ENCODE measurements at regions of chr14 and their contacts with region 1.

Region 1: DNA sequence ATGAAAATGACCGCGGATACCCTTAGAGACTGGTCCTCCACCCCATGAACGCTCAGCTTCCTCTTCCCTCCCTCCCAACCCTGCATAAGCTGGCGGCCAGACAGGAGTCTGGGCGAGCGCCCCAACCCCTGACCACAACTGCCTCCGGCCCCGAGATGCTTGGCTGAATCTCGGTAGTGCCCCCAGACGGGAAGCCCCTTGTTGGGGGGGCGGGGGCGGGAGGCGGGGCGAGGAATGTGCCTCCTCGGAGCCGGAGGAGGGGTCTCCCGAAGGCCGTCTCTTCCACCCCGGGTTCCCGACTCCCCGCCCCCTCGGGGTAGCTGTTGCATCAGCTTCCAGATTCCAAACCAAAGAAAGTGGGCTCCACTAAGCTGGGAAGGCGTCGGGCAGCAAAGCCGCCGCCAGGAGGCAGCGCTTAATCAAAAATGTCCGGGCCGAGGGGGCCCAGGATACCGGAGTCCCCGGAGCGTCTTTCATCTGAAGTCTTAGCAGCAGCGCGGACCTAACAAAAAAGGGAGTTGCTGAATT is 7.1 kb upstream of the MRPL52 start:
- DNase-seq: peak; percentile 83
- H3K4me3 ChIP-seq: peak overlapping the region; percentile 58
- H3K27ac ChIP-seq: peak overlapping the region; percentile 82
- H3K4me1 ChIP-seq: peaks cover 78% of the 10 kb centered on the region
- CTCF ChIP-seq: peak; percentile 90

Region 2: DNA sequence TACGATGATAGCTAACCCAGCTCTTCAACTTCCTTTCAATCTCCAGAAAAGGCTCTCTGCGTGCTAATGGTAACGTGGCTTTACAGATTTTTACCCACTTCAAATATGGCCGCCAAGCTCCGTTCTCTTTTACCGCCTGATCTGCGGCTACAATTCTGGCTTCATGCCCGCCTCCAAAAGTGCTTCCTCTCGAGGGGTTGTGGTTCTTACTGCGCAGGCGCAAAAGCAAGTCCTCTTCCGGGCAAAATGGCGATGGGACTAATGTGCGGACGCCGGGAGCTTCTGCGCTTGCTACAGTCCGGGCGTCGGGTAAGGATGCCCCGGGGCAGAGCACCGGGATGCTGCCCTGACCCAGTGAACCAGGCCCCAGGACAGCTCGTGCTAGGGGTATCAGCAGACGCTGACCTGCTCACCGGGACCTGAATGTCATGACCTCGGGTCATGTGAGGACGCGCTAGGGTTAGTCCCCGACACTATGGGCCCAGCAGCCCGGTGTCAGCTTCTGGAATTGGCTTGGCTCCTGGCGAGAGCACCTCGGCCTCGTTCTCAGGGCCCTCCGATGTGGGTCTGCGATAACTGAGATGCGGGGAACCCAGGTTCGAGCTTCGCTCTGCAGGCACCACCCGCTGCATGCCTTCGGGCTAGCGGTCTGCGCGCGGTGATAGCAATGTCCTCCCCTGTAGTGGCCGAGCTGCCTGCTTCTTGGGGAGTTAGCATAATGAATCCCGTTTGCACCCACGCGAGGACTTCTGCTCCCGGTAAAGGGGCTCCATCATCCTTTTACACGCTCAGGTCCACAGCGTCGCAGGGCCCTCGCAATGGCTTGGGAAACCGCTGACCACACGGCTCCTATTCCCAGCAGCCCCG is 55.9 kb before region 1 on chr14 and contains the start of gene OXA1L:
- CTCF ChIA-PET with region 1: no interaction called
- POLR2A ChIA-PET with region 1: interaction called, 21 read pairs
- intact Hi-C with region 1: no loop called
- DNase-seq: peak; percentile 99
- H3K4me3 ChIP-seq: peak within 1 kb of the TSS; percentile 95
- H3K27ac ChIP-seq: peak within 1 kb of the TSS; percentile 57
- H3K4me1 ChIP-seq: peaks cover 24% of the 10 kb centered on the region
- CTCF ChIP-seq: no peak
- total RNA-seq, gene OXA1L: 128 and 153 TPM in 2 replicates

Region 3: DNA sequence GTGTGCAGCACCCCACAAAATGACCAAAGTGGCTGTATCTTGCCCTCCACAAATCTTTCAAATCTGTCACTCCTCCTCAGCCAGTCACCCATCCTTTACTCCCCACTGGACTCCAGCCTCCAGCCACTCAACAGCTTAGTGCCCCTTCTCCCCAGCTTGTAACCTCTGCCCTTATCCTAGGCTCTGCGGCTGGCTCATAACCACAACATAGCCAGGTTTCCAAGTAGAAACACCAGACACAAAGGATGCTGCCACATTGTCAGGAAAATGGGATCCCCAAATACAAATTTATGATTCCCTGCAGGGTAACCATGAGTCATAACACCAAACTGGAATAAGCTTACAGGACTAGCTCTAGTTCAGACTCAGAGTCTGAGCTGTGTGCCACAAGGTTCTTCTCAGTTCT is 41.0 kb before region 1 on chr14:
- CTCF ChIA-PET with region 1: interaction called, 5 read pairs
- POLR2A ChIA-PET with region 1: interaction called, 9 read pairs
- intact Hi-C with region 1: loop called (anchors 1 kb)
- DNase-seq: no peak
- H3K4me3 ChIP-seq: no peak overlapping the region
- H3K27ac ChIP-seq: peak overlapping the region; percentile 33
- H3K4me1 ChIP-seq: peaks cover 53% of the 10 kb centered on the region
- CTCF ChIP-seq: no peak

Region 4: DNA sequence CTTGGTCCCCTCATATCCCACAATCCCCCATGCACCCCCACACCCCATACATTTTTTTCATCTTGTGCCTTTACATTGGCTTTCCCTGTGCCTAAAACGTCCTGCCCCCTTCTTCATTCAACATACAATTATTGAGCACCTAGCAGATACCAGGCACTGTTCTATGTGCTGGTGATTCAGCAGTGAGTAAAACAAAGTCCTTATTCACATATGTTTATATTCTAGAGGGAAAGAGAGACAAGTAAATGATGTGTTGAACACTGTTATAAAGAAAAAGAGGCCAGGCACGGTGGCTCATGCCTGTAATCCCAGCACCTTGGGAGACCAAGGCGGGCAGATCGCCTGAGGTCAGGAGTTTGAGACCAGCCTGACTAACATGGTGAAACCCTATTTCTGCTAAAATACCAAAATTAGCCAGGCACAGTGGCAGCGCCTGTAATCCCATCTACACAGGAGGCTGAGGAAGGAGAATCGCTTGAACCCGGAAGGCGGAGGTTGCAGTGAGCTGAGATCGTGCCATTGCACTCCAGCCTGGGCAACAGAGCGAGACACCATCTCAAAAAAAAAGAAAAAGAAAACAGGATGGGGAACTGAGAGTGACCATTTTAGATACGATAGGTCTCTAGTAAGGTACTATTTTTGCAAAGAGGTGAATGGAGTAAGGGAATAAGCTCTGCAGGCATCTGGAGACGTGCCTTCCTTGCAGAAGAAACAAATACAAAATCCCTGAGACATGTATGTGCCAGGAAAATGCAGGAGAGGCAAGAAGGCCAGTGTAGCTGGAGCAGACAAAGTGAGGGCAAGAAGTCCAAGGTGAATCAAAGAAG is 19.6 kb before region 1 on chr14:
- CTCF ChIA-PET with region 1: interaction called, 4 read pairs
- POLR2A ChIA-PET with region 1: interaction called, 15 read pairs
- intact Hi-C with region 1: no loop called
- DNase-seq: peak; percentile 53
- H3K4me3 ChIP-seq: peak overlapping the region; percentile 55
- H3K27ac ChIP-seq: peak overlapping the region; percentile 85
- H3K4me1 ChIP-seq: peaks cover 91% of the 10 kb centered on the region
- CTCF ChIP-seq: no peak

Region 5: DNA sequence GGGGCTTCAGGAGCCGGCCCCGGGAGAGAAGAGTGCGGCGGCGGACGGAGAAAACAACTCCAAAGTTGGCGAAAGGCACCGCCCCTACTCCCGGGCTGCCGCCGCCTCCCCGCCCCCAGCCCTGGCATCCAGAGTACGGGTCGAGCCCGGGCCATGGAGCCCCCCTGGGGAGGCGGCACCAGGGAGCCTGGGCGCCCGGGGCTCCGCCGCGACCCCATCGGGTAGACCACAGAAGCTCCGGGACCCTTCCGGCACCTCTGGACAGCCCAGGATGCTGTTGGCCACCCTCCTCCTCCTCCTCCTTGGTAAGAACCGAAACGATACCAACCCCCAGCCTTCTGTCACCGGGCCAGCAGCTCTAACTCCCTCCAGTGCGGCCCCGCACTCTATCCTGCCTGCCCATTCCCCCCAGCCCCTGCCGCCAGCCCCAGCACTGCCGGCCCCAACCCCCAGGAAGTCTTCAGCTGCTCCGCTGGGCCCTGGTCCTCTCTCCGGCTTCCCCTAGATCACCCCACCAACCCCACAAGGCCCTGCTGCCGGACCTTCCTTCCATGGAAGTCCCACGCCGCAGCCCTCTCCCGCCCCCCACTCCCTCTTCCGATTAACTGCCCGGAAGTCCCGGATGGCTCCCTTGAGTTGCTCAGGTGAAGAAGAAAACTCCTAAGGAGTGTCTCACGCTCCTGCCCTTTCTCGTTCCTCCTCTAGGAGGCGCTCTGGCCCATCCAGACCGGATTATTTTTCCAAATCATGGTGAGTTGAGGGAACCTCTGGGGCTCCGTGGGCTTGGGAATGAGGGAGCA is 49.6 kb after region 1 on chr14:
- CTCF ChIA-PET with region 1: no interaction called
- POLR2A ChIA-PET with region 1: interaction called, 5 read pairs
- intact Hi-C with region 1: loop called (anchors 5 kb)
- DNase-seq: peak; percentile 80
- H3K4me3 ChIP-seq: peak overlapping the region; percentile 86
- H3K27ac ChIP-seq: peak overlapping the region; percentile 93
- H3K4me1 ChIP-seq: peaks cover 31% of the 10 kb centered on the region
- CTCF ChIP-seq: peak; percentile 98

Region 6: DNA sequence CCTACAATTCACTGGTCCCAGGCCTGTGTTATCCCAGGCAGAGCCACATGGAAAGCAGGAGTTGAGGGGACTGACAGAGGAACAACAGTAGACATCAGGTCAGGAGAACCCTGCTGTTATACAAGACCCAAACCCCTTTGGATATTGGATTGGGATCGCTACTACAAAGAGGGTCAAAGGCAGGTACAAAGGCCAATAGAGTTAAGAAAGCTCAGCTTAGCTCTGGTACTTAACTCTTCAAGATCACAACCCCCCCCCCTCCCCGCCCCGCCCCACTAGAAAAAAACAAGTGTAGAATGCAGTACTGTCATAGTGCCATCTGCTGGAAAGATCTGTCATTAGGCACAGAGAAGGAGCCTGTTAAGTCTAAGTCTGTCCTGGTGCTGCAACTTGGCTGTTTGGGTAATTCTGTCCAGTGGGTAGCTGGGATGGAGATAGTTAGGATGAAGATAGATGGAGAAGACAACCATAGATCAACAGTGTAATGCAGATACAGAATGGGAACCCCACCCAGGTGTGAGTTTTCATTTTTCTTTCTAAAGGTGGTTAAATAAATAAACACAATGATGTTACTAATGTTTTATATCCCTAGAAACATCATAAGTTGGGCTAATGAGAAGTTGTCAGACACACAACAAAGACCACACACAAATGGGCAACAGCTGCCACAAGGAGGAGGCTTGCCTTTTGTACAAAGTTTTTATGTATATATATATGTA is 77.6 kb after region 1 on chr14:
- CTCF ChIA-PET with region 1: no interaction called
- POLR2A ChIA-PET with region 1: no interaction called
- intact Hi-C with region 1: loop called (anchors 2 kb)
- DNase-seq: peak; percentile 83
- H3K4me3 ChIP-seq: no peak overlapping the region
- H3K27ac ChIP-seq: peak overlapping the region; percentile 14
- H3K4me1 ChIP-seq: peaks cover 10% of the 10 kb centered on the region
- CTCF ChIP-seq: peak; percentile 82

Measured in OCI-LY7 (cell line).